ENCODE measurements at regions of chr15 and their contacts with region 1.

Region 1: DNA sequence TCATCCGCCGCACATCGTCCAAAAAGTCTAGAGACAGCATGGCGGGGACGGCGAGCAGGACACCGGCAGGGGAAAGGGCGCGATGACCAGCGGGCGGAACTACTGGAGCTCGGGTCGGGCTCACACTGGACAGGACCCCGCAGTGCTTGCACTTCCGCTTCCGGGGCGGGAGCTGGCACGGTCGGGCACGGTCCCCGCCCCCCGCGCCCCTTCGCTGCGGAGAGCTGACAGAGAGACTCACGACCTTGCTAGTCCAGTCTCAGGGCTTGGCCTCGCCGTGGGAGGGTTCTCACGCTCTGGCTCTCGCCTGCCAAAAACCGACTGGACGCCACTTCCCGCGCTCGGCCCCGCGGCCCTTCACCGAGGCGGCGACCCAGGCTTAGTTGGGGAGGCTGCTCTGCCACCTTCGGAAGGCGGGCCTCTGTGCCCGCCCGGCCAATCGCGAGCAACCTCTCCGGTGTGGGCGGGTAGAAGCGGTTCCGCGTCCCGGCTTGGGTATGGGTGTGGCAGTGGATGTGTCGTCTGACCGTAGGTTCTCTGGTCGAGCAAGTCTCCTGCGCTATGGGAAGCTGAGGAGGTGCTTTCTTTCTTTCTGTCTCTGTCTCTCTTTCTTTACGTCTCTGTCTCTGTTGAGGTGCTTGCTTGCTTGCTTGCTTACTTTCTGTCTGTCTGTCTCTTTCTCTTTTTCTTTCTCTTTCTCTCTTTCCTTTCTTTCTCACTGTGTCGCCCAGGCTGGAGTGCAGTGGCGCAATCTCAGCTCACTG is at the start of gene SEC11A:
- DNase-seq: peak; percentile 84 to 98 (median 88)
- ATAC-seq: peak; percentile 95
- H3K4me3 Mint-ChIP-seq: peak within 1 kb of the TSS; percentile 91 to 100 (median 94)
- H3K27ac Mint-ChIP-seq: peak within 1 kb of the TSS; percentile 94 to 100 (median 97)
- H3K4me1 Mint-ChIP-seq: peaks cover 18 to 73% (median 51%) of the 10 kb centered on the region in 4 donors
- H3K27me3 Mint-ChIP-seq: no peaks in the 10 kb centered on the region
- polyA plus RNA-seq, gene SEC11A: 103 to 128 (median 119) TPM

Region 2: GRCh38 chr15:84734794-84735479 is 18.7 kb after region 1 on chr15:
- POLR2A ChIA-PET with region 1: interaction called, 375 read pairs
- DNase-seq: peak; percentile 29 to 86 (median 68)
- ATAC-seq: peak; percentile 88 to 89
- H3K4me3 Mint-ChIP-seq: peak overlapping the region; percentile 75 to 91 (median 84)
- H3K27ac Mint-ChIP-seq: peak overlapping the region; percentile 84 to 97 (median 93)
- H3K4me1 Mint-ChIP-seq: peaks cover 24 to 52% (median 45%) of the 10 kb centered on the region in 4 donors
- H3K27me3 Mint-ChIP-seq: no peaks in the 10 kb centered on the region

Region 3: GRCh38 chr15:84741121-84741520 is 24.9 kb after region 1 on chr15:
- POLR2A ChIA-PET with region 1: interaction called, 434 read pairs
- DNase-seq: no peak
- ATAC-seq: no peak
- H3K4me3 Mint-ChIP-seq: no peak overlapping the region
- H3K27ac Mint-ChIP-seq: peak overlapping the region in 9 of 10 donors; percentile 17 to 88 (median 67)
- H3K4me1 Mint-ChIP-seq: peaks cover 35 to 65% (median 53%) of the 10 kb centered on the region in 4 donors
- H3K27me3 Mint-ChIP-seq: no peaks in the 10 kb centered on the region

Region 4: DNA sequence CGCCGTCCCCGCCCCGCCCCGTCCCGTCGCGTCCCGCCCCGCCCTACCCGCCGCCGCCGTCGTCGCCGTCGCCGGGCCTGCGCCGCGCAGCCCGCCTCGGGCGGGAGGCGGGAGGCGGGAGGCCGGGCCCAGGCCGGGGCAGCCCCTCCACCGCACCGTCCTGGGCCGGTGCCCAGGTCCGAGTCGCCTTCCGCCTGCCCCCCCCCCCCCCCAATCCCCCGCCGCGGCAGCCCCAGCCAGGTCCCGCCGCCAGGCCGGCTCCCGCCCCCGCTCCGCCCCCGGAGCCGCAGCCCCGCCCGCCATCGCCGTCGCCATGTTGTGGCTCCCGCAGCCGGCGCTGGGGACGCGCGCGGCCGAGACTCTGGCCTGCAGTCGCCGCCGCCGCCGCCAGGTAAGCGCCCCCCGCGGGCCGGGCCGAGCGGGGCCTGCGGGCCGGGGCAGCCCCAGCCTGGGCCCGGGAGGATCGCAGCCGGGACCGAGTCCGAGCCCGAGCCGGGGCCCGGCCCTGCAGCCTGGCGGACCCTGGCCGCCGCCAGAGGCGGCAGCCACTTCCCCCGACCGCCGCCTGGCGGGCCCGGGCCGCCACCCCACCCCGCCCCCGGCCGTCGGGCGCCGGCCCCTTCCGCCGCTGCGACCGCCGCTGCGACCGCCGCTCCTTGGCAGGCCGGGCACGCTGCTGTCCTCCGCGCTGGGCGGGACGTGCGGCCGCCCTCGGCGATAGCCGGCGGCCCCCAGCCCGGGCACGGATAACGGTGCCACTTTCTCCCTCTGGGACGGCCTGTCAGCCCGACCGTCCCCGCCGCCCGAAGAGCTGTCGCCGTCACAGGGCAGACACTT is 32.3 kb after region 1 on chr15 and contains the start of gene ZNF592:
- POLR2A ChIA-PET with region 1: interaction called, 434 read pairs
- DNase-seq: peak; percentile 68 to 87 (median 82)
- ATAC-seq: peak; percentile 67 to 68
- H3K4me3 Mint-ChIP-seq: peak within 1 kb of the TSS; percentile 93 to 100 (median 98)
- H3K27ac Mint-ChIP-seq: peak within 1 kb of the TSS; percentile 98 to 100 (median 99)
- H3K4me1 Mint-ChIP-seq: peaks cover 49 to 74% (median 71%) of the 10 kb centered on the region in 4 donors
- H3K27me3 Mint-ChIP-seq: no peaks in the 10 kb centered on the region
- polyA plus RNA-seq, gene ZNF592: 3.2 to 9.4 (median 4.1) TPM